CD4-positive, alpha-beta memory T cell (primary cell): ENCODE measurements at regions of chr3 and their contacts with region 1.

Region 1: GRCh38 chr3:179015551-179016020 is 56.0 kb downstream of the ZMAT3 start:
- DNase-seq: peak; percentile 79 to 82 (median 79)
- H3K4me3 ChIP-seq: no peak overlapping the region
- H3K4me3 Mint-ChIP-seq: peak overlapping the region in 2 of 8 donors; percentile 26 to 33
- H3K27ac ChIP-seq: no peak overlapping the region
- H3K27ac Mint-ChIP-seq: peak overlapping the region in 5 of 7 donors; percentile 4 to 66 (median 53)
- H3K4me1 ChIP-seq: peaks cover 27% of the 10 kb centered on the region
- H3K4me1 Mint-ChIP-seq: peaks cover 19 to 34% (median 31%) of the 10 kb centered on the region in 4 donors
- H3K27me3 ChIP-seq: no peaks in the 10 kb centered on the region
- H3K27me3 Mint-ChIP-seq: peaks cover 0 to 1% of the 10 kb centered on the region in 2 donors

Region 2: DNA sequence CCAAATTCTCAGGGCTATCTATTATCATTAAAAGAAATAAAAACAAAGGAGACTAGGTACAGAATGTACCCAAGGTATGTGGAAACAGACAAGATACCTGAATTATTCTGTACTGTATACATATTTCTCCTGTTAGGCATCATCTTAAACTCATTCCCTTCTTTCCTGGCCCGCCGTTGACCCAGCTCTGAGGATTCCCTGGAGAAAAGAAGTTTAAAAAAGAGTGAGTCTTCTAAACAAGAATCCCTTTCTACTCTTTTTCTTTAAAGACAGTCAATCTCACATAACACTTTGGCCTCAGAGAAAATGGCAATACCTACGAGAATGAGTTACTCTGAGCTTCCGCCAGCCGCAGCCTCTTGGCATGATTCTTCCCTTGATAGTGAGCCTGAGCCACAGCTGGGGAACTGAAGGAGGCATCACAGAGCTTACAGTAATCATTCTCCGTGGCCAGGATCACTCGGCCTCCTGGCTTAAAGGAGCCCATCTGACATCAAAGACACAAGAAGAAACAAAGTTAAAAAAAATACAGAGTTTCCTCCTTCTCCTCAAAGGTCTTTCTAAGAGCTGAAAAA is 11.8 kb after region 1 on chr3:
- CTCF ChIA-PET with region 1: interaction called, 22 read pairs
- POLR2A ChIA-PET with region 1: interaction called, 3 read pairs
- intact Hi-C with region 1: no loop called
- DNase-seq: no peak
- H3K4me3 ChIP-seq: no peak overlapping the region
- H3K4me3 Mint-ChIP-seq: peak overlapping the region in 5 of 8 donors; percentile 1 to 44 (median 33)
- H3K27ac ChIP-seq: no peak overlapping the region
- H3K27ac Mint-ChIP-seq: peak overlapping the region in 6 of 7 donors; percentile 53 to 90 (median 74)
- H3K4me1 ChIP-seq: peaks cover 11% of the 10 kb centered on the region
- H3K4me1 Mint-ChIP-seq: peaks cover 4 to 17% (median 15%) of the 10 kb centered on the region in 4 donors
- H3K27me3 ChIP-seq: no peaks in the 10 kb centered on the region
- H3K27me3 Mint-ChIP-seq: no peaks in the 10 kb centered on the region

Region 3: GRCh38 chr3:179071550-179072397 is 56.2 kb after region 1 on chr3 and contains the start of gene ZMAT3:
- CTCF ChIA-PET with region 1: interaction called, 43 read pairs
- POLR2A ChIA-PET with region 1: interaction called, 12 read pairs
- intact Hi-C with region 1: loop called (anchors 1 kb)
- DNase-seq: peak; percentile 84 to 91 (median 86)
- H3K4me3 ChIP-seq: peak within 1 kb of the TSS; percentile 79 to 81
- H3K4me3 Mint-ChIP-seq: peak within 1 kb of the TSS; percentile 94 to 98 (median 97)
- H3K27ac ChIP-seq: peak within 1 kb of the TSS; percentile 77
- H3K27ac Mint-ChIP-seq: peak within 1 kb of the TSS; percentile 93 to 98 (median 95)
- H3K4me1 ChIP-seq: peaks cover 53% of the 10 kb centered on the region
- H3K4me1 Mint-ChIP-seq: peaks cover 41 to 67% (median 56%) of the 10 kb centered on the region in 4 donors
- H3K27me3 ChIP-seq: no peaks in the 10 kb centered on the region
- H3K27me3 Mint-ChIP-seq: no peaks in the 10 kb centered on the region
- total RNA-seq, gene ZMAT3: 18.5 to 20.0 TPM

Region 4: GRCh38 chr3:179108086-179108485 is 92.5 kb after region 1 on chr3:
- CTCF ChIA-PET with region 1: interaction called, 8 read pairs
- POLR2A ChIA-PET with region 1: no interaction called
- intact Hi-C with region 1: loop called (anchors 1 kb)
- DNase-seq: no peak
- H3K4me3 ChIP-seq: no peak overlapping the region
- H3K4me3 Mint-ChIP-seq: no peak overlapping the region
- H3K27ac ChIP-seq: no peak overlapping the region
- H3K27ac Mint-ChIP-seq: no peak overlapping the region
- H3K4me1 ChIP-seq: no peaks in the 10 kb centered on the region
- H3K4me1 Mint-ChIP-seq: peaks cover 0 to 2% (median 1%) of the 10 kb centered on the region in 4 donors
- H3K27me3 ChIP-seq: peaks cover 4% of the 10 kb centered on the region
- H3K27me3 Mint-ChIP-seq: peaks cover 4 to 7% of the 10 kb centered on the region in 2 donors

Region 5: GRCh38 chr3:179272385-179272784 is 256.8 kb after region 1 on chr3:
- CTCF ChIA-PET with region 1: interaction called, 3 read pairs
- POLR2A ChIA-PET with region 1: no interaction called
- intact Hi-C with region 1: loop called (anchors 1 kb)
- DNase-seq: no peak
- H3K4me3 ChIP-seq: no peak overlapping the region
- H3K4me3 Mint-ChIP-seq: no peak overlapping the region
- H3K27ac ChIP-seq: no peak overlapping the region
- H3K27ac Mint-ChIP-seq: peak overlapping the region in 1 of 7 donors; percentile 1
- H3K4me1 ChIP-seq: no peaks in the 10 kb centered on the region
- H3K4me1 Mint-ChIP-seq: no peaks in the 10 kb centered on the region
- H3K27me3 ChIP-seq: no peaks in the 10 kb centered on the region
- H3K27me3 Mint-ChIP-seq: peaks cover 7 to 17% of the 10 kb centered on the region in 2 donors

Region 6: GRCh38 chr3:179322286-179323196 is 307.0 kb after region 1 on chr3 and contains the start of gene ZNF639:
- CTCF ChIA-PET with region 1: interaction called, 80 read pairs
- POLR2A ChIA-PET with region 1: interaction called, 11 read pairs
- intact Hi-C with region 1: loop called (anchors 1 kb)
- DNase-seq: peak; percentile 83 to 88 (median 87)
- H3K4me3 ChIP-seq: peak within 1 kb of the TSS; percentile 70 to 83
- H3K4me3 Mint-ChIP-seq: peak within 1 kb of the TSS; percentile 90 to 96 (median 92)
- H3K27ac ChIP-seq: peak within 1 kb of the TSS; percentile 98
- H3K27ac Mint-ChIP-seq: peak within 1 kb of the TSS; percentile 87 to 97 (median 97)
- H3K4me1 ChIP-seq: peaks cover 32% of the 10 kb centered on the region
- H3K4me1 Mint-ChIP-seq: peaks cover 25 to 39% (median 31%) of the 10 kb centered on the region in 4 donors
- H3K27me3 ChIP-seq: no peaks in the 10 kb centered on the region
- H3K27me3 Mint-ChIP-seq: no peaks in the 10 kb centered on the region
- total RNA-seq, gene ZNF639: 43.2 to 45.6 TPM

Region 7: GRCh38 chr3:180026997-180027396 is 1011.4 kb after region 1 on chr3:
- CTCF ChIA-PET with region 1: no interaction called
- POLR2A ChIA-PET with region 1: no interaction called
- intact Hi-C with region 1: no loop called
- DNase-seq: no peak
- H3K4me3 ChIP-seq: no peak overlapping the region
- H3K4me3 Mint-ChIP-seq: no peak overlapping the region
- H3K27ac ChIP-seq: no peak overlapping the region
- H3K27ac Mint-ChIP-seq: no peak overlapping the region
- H3K4me1 ChIP-seq: no peaks in the 10 kb centered on the region
- H3K4me1 Mint-ChIP-seq: no peaks in the 10 kb centered on the region
- H3K27me3 ChIP-seq: no peaks in the 10 kb centered on the region
- H3K27me3 Mint-ChIP-seq: peaks cover under 1 to 3% of the 10 kb centered on the region in 2 donors